Motor neuron (in vitro differentiated cells): ENCODE measurements at regions of chr12 and their contacts with region 1.

Region 1: DNA sequence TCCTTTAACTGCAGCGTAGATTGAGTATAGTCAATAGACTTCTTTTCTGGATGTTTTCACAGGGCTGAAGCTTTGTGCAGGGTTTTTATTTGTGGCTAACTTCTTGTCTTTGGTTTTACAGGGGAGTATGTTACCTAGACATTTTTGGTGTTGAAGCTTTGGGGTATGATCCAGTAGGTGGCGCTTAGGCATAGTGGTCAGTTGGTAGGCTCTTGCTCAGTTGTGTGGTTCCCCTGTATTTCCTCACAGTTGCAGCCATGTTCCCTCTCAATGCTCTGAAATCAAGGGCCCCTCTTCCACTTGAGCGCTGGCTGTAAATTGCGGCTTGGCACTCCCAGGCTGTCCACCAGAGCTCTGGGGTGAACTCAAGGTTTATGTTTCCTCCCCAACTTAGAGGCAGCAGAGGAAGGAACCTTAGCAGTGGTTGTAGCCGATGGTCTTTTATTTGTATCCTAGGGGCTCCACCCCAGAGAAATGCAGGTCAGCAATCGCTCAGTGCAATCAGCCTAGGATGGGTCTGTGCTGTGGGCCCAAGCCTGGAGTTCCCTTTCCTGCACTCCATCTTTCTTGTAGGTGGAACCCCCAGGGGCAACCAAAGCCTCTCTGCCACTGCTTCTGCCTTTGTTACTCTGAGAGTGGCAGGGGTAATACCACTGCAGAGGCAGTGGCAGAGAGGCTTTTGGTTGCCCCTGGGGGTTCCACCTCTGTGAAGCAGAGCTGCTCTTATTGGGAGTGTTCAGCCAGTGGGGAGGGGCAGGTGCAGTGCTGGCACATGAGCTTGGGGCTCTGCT is 55.1 kb downstream of the CMAS start:
- ATAC-seq: peak in 7 of 8 experiments; percentile 9 to 69 (median 50)
- H3K4me3 ChIP-seq: no peak overlapping the region
- H3K27ac ChIP-seq: no peak overlapping the region
- H3K4me1 ChIP-seq: no peaks in the 10 kb centered on the region

Region 2: DNA sequence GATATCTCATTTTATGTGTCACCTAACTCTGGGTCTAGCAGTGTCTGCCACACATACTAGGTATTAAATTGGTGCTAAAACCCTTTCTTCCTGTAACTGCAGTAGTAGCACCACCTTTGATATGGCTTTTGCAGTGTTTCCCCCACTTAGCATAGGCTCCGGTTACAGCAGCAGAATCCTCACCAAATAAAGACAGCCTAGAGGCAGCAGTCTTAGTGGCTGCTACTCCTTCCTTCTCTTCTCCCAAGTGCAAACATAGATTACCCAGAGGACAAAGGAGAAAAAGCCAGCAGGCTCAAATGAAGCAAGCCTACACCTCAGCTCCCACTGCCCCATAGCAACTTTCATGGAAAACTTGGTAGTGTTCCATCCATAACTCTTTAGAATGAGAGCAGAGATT is 129.8 kb before region 1 on chr12:
- in situ Hi-C with region 1: no loop called
- ATAC-seq: peak in 2 of 8 experiments; percentile 23 to 26
- H3K4me3 ChIP-seq: no peak overlapping the region
- H3K27ac ChIP-seq: no peak overlapping the region
- H3K4me1 ChIP-seq: no peaks in the 10 kb centered on the region

Region 3: DNA sequence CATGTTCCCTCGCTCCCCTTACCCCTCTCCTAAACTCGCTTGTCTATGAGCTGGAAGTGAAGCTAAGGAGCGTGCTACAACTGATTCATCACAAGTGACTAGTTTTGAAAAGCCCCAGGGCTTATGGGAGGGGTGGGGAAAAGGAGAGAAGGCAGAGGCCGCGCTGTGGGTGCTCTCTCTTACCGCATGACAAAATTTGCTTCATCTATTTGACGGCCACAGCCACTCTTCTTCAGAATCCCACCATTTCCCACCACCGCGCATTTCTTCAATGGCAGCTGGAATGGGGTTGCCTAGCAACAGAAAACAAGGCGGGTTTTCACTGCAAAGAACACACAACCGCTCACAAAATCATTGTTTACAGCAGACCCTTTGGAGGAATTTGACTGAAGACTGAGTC is 153.9 kb after region 1 on chr12:
- in situ Hi-C with region 1: no loop called
- ATAC-seq: peak in 7 of 8 experiments; percentile 60 to 88 (median 81)
- H3K4me3 ChIP-seq: peak overlapping the region in 2 of 5 donors; percentile 18 to 19
- H3K27ac ChIP-seq: peak overlapping the region; percentile 0 to 63
- H3K4me1 ChIP-seq: peaks cover 36 to 41% of the 10 kb centered on the region in 2 donors

Region 4: GRCh38 chr12:22334410-22335290 is 233.5 kb after region 1 on chr12 and contains the start of gene ST8SIA1:
- in situ Hi-C with region 1: loop called in 8 of 9 experiments (anchors 10 to 25 kb)
- ATAC-seq: peak; percentile 13 to 80 (median 73)
- H3K4me3 ChIP-seq: peak within 1 kb of the TSS; percentile 58 to 76 (median 70)
- H3K27ac ChIP-seq: peak within 1 kb of the TSS; percentile 83 to 84
- H3K4me1 ChIP-seq: peaks cover 5 to 25% of the 10 kb centered on the region in 2 donors
- total RNA-seq, gene ST8SIA1: 0.10 to 31.3 (median 17.6) TPM in 7 of 8 experiments, not detected in the other

Region 5: GRCh38 chr12:22443379-22444316 is 342.5 kb after region 1 on chr12:
- in situ Hi-C with region 1: loop called in 6 of 9 experiments (anchors 25 kb)
- ATAC-seq: peak; percentile 99 to 100 (median 100)
- H3K4me3 ChIP-seq: no peak overlapping the region
- H3K27ac ChIP-seq: no peak overlapping the region
- H3K4me1 ChIP-seq: no peaks in the 10 kb centered on the region